CD4-positive, alpha-beta memory T cell (primary cell): ENCODE measurements at regions of chr19 and their contacts with region 1.

Region 1: GRCh38 chr19:2962045-2962561 is 15.3 kb upstream of the TLE6 start:
- DNase-seq: peak; percentile 72 to 80 (median 77)
- H3K4me3 ChIP-seq: no peak overlapping the region
- H3K4me3 Mint-ChIP-seq: peak overlapping the region in 2 of 8 donors; percentile 16 to 17
- H3K27ac ChIP-seq: no peak overlapping the region
- H3K27ac Mint-ChIP-seq: peak overlapping the region; percentile 48 to 92 (median 85)
- H3K4me1 ChIP-seq: no peaks in the 10 kb centered on the region
- H3K4me1 Mint-ChIP-seq: peaks cover 4 to 6% (median 5%) of the 10 kb centered on the region in 4 donors
- H3K27me3 ChIP-seq: no peaks in the 10 kb centered on the region
- H3K27me3 Mint-ChIP-seq: no peaks in the 10 kb centered on the region

Region 2: GRCh38 chr19:2627319-2627829 is 334.7 kb before region 1 on chr19:
- CTCF ChIA-PET with region 1: no interaction called
- POLR2A ChIA-PET with region 1: no interaction called
- intact Hi-C with region 1: no loop called
- DNase-seq: peak in 1 of 5 donors; percentile 38
- H3K4me3 ChIP-seq: no peak overlapping the region
- H3K4me3 Mint-ChIP-seq: no peak overlapping the region
- H3K27ac ChIP-seq: no peak overlapping the region
- H3K27ac Mint-ChIP-seq: peak overlapping the region in 4 of 7 donors; percentile 25 to 81 (median 70)
- H3K4me1 ChIP-seq: peaks cover 12% of the 10 kb centered on the region
- H3K4me1 Mint-ChIP-seq: peaks cover 11 to 51% (median 29%) of the 10 kb centered on the region in 4 donors
- H3K27me3 ChIP-seq: no peaks in the 10 kb centered on the region
- H3K27me3 Mint-ChIP-seq: no peaks in the 10 kb centered on the region

Region 3: GRCh38 chr19:3210347-3211017 is 248.4 kb after region 1 on chr19:
- CTCF ChIA-PET with region 1: interaction called, 7 read pairs
- POLR2A ChIA-PET with region 1: interaction called, 3 read pairs
- intact Hi-C with region 1: loop called (anchors 1 kb)
- DNase-seq: peak; percentile 56 to 67 (median 58)
- H3K4me3 ChIP-seq: no peak overlapping the region
- H3K4me3 Mint-ChIP-seq: no peak overlapping the region
- H3K27ac ChIP-seq: no peak overlapping the region
- H3K27ac Mint-ChIP-seq: peak overlapping the region in 4 of 7 donors; percentile 16 to 84 (median 30)
- H3K4me1 ChIP-seq: no peaks in the 10 kb centered on the region
- H3K4me1 Mint-ChIP-seq: peaks cover 0 to 10% (median 4%) of the 10 kb centered on the region in 4 donors
- H3K27me3 ChIP-seq: no peaks in the 10 kb centered on the region
- H3K27me3 Mint-ChIP-seq: no peaks in the 10 kb centered on the region